SK-N-SH (cell line): ENCODE measurements at regions of chr2 and their contacts with region 1.

Region 1: DNA sequence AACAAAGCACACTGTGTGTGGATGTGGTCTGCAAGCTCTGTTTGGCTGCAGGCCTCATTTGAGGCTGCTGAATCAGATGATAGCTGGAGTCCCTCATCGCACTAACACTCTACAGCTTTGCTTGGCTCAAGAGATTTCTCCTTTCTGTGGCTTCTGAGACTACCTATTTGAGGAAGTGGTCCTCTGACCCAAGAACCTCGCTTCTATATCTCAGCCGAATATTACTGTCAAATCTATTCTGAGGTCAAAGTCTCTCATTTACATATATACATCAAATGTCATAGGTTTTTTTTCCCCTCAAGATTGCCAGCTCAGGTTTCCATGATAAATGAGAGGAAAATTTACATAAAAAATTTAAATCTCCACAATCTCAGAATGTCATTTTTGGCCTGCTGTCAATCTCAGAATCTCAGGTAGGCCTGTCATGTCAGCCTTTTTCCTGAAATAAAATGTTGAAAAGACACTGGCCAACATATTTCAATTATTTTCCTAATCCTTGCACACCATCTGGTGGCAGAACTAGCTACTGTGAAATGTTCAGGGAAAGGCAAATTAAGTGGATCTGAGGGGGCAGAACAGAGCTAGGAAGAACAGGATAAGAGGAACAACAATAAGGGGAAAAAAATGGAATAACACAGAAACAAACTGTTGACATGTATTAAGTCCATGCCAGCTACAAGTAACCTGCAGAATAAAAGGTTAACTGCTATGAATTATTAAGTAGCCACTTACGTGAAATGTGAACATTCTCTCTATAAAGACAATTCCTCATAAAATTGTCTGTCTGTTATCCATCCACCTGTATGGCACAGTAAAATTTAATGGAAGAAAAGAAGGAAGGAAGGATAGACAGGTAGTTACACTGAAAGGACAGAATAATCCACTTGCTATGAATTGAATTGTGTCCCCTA is 39.3 kb downstream of the AP1S3 start:
- DNase-seq: peak; percentile 48
- H3K4me3 ChIP-seq: peak overlapping the region in 1 of 2 experiments; percentile 29; a peak in 1 of 4 replicates
- H3K27ac ChIP-seq: peak overlapping the region in 1 of 2 experiments; percentile 69; a peak in 2 of 4 replicates
- H3K4me1 ChIP-seq: peaks cover 0 to 47% of the 10 kb centered on the region in 2 experiments; a peak in 2 of 4 replicates
- H3K27me3 ChIP-seq: no peaks in the 10 kb centered on the region
- CTCF ChIP-seq: peak; percentile 81
- EP300 ChIP-seq: no peak
- RAD21 ChIP-seq: peak; percentile 94

Region 2: DNA sequence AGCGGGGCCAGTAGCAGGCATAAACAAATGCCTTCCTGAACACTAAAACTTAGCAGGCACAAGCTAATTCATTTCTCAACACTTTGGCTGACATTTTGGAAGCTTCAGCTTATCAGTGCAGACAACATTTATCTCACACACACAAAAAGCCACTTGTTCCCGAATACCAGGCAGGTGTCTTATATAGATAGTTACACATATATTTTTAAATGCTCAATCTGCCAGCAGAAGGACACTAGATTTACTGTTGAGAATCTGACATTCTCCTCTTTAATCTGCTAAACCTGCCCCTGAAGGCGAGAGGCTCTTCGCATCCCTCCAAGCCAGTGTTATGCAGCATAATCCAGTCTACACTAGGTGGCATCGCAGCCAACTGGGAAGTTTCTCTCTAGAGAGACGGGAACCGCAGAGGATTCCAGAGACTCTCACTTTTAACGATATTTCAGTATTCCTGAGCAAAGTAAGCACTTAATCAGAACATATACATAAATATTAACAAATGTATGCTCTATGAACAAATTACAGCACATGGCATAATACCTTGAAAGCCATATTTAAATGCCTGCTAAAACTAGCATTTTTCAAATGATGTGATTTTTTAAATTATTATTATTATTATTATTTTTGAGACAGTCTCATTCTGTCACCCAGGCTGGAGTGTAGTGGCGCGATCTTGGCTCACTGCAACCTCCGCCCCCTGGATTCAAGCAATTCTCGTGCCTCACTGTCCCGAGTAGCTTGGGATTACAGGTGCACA is 105.7 kb before region 1 on chr2:
- CTCF ChIA-PET with region 1: interaction called, 19 read pairs
- POLR2A ChIA-PET with region 1: no interaction called
- DNase-seq: peak; percentile 55
- H3K4me3 ChIP-seq: no peak overlapping the region; a peak in 1 of 4 replicates
- H3K27ac ChIP-seq: no peak overlapping the region
- H3K4me1 ChIP-seq: peaks cover 0 to 15% of the 10 kb centered on the region in 2 experiments
- H3K27me3 ChIP-seq: no peaks in the 10 kb centered on the region
- CTCF ChIP-seq: peak; percentile 72
- EP300 ChIP-seq: no peak
- RAD21 ChIP-seq: peak; percentile 77

Region 3: GRCh38 chr2:223787358-223787757 is 10.7 kb before region 1 on chr2:
- CTCF ChIA-PET with region 1: interaction called, 15 read pairs
- POLR2A ChIA-PET with region 1: no interaction called
- DNase-seq: no peak
- H3K4me3 ChIP-seq: no peak overlapping the region
- H3K27ac ChIP-seq: no peak overlapping the region
- H3K4me1 ChIP-seq: no peaks in the 10 kb centered on the region
- H3K27me3 ChIP-seq: no peaks in the 10 kb centered on the region
- CTCF ChIP-seq: no peak
- EP300 ChIP-seq: no peak
- RAD21 ChIP-seq: no peak